ENCODE measurements at regions of chr18 and their contacts with region 1.

Region 1: GRCh38 chr18:2985628-2986027 is 27.3 kb downstream of the LPIN2 start:
- DNase-seq: no peak
- H3K4me3 Mint-ChIP-seq: no peak overlapping the region
- H3K27ac Mint-ChIP-seq: no peak overlapping the region
- H3K4me1 Mint-ChIP-seq: peaks cover 71% of the 10 kb centered on the region
- H3K27me3 Mint-ChIP-seq: no peaks in the 10 kb centered on the region

Region 2: GRCh38 chr18:2716394-2717326 is 269.0 kb before region 1 on chr18:
- CTCF ChIA-PET with region 1: no interaction called
- POLR2A ChIA-PET with region 1: no interaction called
- DNase-seq: no peak
- H3K4me3 Mint-ChIP-seq: no peak overlapping the region
- H3K27ac Mint-ChIP-seq: peak overlapping the region; percentile 19
- H3K4me1 Mint-ChIP-seq: peaks cover 44% of the 10 kb centered on the region
- H3K27me3 Mint-ChIP-seq: no peaks in the 10 kb centered on the region

Region 3: GRCh38 chr18:2797951-2798350 is 187.7 kb before region 1 on chr18:
- CTCF ChIA-PET with region 1: no interaction called
- POLR2A ChIA-PET with region 1: no interaction called
- DNase-seq: no peak
- H3K4me3 Mint-ChIP-seq: no peak overlapping the region
- H3K27ac Mint-ChIP-seq: peak overlapping the region; percentile 6
- H3K4me1 Mint-ChIP-seq: no peaks in the 10 kb centered on the region
- H3K27me3 Mint-ChIP-seq: no peaks in the 10 kb centered on the region

Region 4: DNA sequence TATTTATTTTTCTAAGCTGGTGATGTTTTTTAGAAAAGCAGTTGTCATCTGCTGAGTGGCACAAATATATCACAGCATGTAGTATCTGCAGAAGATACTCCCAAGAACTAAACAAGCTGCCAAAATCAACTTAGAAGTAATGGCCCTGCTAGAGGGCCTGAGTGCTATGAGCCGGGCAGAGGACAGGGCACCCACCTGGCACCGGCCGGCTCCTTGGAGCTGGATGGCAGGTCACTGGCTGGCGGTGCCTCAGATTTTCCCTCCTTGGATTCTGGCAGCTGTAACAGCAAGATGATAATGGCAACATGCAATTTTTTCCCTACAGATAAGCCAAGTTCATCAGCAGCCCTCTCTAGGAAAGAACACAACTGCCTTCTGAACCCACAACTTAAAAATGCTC is 59.1 kb before region 1 on chr18:
- CTCF ChIA-PET with region 1: interaction called, 81 read pairs
- POLR2A ChIA-PET with region 1: interaction called, 3 read pairs
- DNase-seq: no peak
- H3K4me3 Mint-ChIP-seq: no peak overlapping the region
- H3K27ac Mint-ChIP-seq: no peak overlapping the region
- H3K4me1 Mint-ChIP-seq: no peaks in the 10 kb centered on the region
- H3K27me3 Mint-ChIP-seq: no peaks in the 10 kb centered on the region

Region 5: GRCh38 chr18:2939317-2939716 is 46.3 kb before region 1 on chr18:
- CTCF ChIA-PET with region 1: interaction called, 81 read pairs
- POLR2A ChIA-PET with region 1: interaction called, 16 read pairs
- DNase-seq: no peak
- H3K4me3 Mint-ChIP-seq: no peak overlapping the region
- H3K27ac Mint-ChIP-seq: no peak overlapping the region
- H3K4me1 Mint-ChIP-seq: peaks cover 22% of the 10 kb centered on the region
- H3K27me3 Mint-ChIP-seq: no peaks in the 10 kb centered on the region

Region 6: GRCh38 chr18:2958819-2959298 is 26.8 kb before region 1 on chr18:
- CTCF ChIA-PET with region 1: interaction called, 70 read pairs
- POLR2A ChIA-PET with region 1: interaction called, 255 read pairs
- DNase-seq: peak; percentile 67
- H3K4me3 Mint-ChIP-seq: peak overlapping the region; percentile 73
- H3K27ac Mint-ChIP-seq: peak overlapping the region; percentile 99
- H3K4me1 Mint-ChIP-seq: peaks cover 89% of the 10 kb centered on the region
- H3K27me3 Mint-ChIP-seq: no peaks in the 10 kb centered on the region

Region 7: DNA sequence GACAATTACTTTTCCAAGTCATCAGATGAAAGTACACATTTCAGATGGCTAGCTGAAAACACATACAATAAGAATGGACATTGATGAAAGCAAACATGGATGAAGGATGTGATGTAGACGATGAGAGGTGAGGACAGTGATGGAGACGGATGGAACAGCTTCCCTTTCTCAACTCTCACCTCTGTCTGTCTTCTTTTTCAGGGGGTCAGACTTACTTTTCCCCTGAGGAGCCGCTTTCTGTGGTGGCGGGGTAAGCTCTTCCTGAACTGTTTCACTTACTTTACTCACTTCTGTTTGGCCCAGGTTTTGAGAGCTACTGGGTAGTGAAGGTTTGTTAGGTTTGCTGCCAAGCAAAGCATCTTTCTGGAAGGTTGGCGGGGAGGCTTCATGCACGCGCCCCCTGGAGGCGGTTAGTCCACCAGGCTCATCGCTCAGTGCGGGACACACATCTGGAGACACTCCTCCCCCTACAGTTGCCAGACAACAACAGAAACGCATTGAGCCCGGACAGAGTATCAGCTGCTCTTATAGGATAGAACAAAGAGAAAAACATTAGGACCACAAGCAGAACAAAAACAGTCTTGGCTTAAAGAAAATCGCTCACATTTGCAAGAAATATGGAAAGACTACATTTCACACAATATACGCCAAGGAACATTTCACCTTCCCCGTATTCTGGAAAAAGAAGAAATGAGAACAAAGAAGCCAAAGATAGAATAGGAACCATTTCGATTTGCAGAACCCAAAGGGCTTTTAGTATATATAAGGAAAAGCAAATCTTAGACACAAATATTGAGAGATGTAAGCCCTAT is 143.6 kb after region 1 on chr18:
- CTCF ChIA-PET with region 1: interaction called, 13 read pairs
- POLR2A ChIA-PET with region 1: no interaction called
- DNase-seq: peak; percentile 84
- H3K4me3 Mint-ChIP-seq: no peak overlapping the region
- H3K27ac Mint-ChIP-seq: no peak overlapping the region
- H3K4me1 Mint-ChIP-seq: peaks cover 9% of the 10 kb centered on the region
- H3K27me3 Mint-ChIP-seq: peaks cover 2% of the 10 kb centered on the region

Region 8: GRCh38 chr18:3140986-3141639 is 155.5 kb after region 1 on chr18:
- CTCF ChIA-PET with region 1: no interaction called
- POLR2A ChIA-PET with region 1: no interaction called
- DNase-seq: no peak
- H3K4me3 Mint-ChIP-seq: no peak overlapping the region
- H3K27ac Mint-ChIP-seq: no peak overlapping the region
- H3K4me1 Mint-ChIP-seq: no peaks in the 10 kb centered on the region
- H3K27me3 Mint-ChIP-seq: peaks cover 4% of the 10 kb centered on the region

Region 9: DNA sequence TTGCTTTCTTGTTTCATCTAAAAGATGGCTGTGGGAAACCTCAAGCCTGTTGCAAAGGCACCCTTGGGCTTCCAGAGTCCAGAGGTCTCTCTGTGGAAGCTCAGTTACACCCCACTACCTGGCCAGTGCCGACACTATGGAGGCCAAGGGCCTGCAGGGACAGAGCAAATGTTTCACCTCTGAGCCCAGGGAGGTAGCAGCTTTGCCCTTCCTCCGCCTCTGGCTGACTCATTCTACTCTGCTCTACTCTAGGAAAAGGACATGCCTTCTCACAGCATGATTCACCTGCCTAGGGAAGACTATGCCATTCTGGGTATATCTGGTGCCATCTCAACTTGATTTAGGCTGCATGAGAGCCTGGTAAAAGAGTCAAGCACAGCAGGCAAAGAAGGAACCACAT is 221.9 kb after region 1 on chr18:
- CTCF ChIA-PET with region 1: no interaction called
- POLR2A ChIA-PET with region 1: no interaction called
- DNase-seq: no peak
- H3K4me3 Mint-ChIP-seq: no peak overlapping the region
- H3K27ac Mint-ChIP-seq: no peak overlapping the region
- H3K4me1 Mint-ChIP-seq: peaks cover 7% of the 10 kb centered on the region
- H3K27me3 Mint-ChIP-seq: peaks cover 1% of the 10 kb centered on the region

Measured in activated CD4-positive, alpha-beta memory T cell treated with anti-CD3 and anti-CD28 coated beads, Interleukin-2, amount 10 ng/mL, durations not matched to agents 7 days and 5 days (primary cell).